CD14-positive monocyte (primary cell): ENCODE measurements at regions of chr1 and their contacts with region 1.

Region 1: GRCh38 chr1:32876341-32877210 is 5.9 kb upstream of the FNDC5 start:
- DNase-seq: peak; percentile 47 to 65 (median 53)
- H3K4me3 ChIP-seq: no peak overlapping the region
- H3K4me3 Mint-ChIP-seq: no peak overlapping the region
- H3K27ac ChIP-seq: no peak overlapping the region
- H3K27ac Mint-ChIP-seq: peak overlapping the region in 1 of 7 donors; percentile 62
- H3K4me1 ChIP-seq: no peaks in the 10 kb centered on the region
- H3K4me1 Mint-ChIP-seq: peaks cover 5% of the 10 kb centered on the region
- H3K27me3 ChIP-seq: peaks cover 6 to 35% of the 10 kb centered on the region in 2 donors
- H3K27me3 Mint-ChIP-seq: peaks cover 27 to 46% (median 44%) of the 10 kb centered on the region in 3 donors
- CTCF ChIP-seq: peak; percentile 96

Region 2: GRCh38 chr1:32521165-32521564 is 355.4 kb before region 1 on chr1:
- intact Hi-C with region 1: loop called in 1 of 2 experiments (anchors 10 kb)
- DNase-seq: no peak
- H3K4me3 ChIP-seq: no peak overlapping the region
- H3K4me3 Mint-ChIP-seq: peak overlapping the region; percentile 10 to 75
- H3K27ac ChIP-seq: no peak overlapping the region
- H3K27ac Mint-ChIP-seq: no peak overlapping the region
- H3K4me1 ChIP-seq: peaks cover 4 to 5% of the 10 kb centered on the region in 2 donors
- H3K4me1 Mint-ChIP-seq: peaks cover 3% of the 10 kb centered on the region
- H3K27me3 ChIP-seq: no peaks in the 10 kb centered on the region
- H3K27me3 Mint-ChIP-seq: peaks cover 4 to 10% (median 10%) of the 10 kb centered on the region in 3 donors
- CTCF ChIP-seq: no peak

Region 3: DNA sequence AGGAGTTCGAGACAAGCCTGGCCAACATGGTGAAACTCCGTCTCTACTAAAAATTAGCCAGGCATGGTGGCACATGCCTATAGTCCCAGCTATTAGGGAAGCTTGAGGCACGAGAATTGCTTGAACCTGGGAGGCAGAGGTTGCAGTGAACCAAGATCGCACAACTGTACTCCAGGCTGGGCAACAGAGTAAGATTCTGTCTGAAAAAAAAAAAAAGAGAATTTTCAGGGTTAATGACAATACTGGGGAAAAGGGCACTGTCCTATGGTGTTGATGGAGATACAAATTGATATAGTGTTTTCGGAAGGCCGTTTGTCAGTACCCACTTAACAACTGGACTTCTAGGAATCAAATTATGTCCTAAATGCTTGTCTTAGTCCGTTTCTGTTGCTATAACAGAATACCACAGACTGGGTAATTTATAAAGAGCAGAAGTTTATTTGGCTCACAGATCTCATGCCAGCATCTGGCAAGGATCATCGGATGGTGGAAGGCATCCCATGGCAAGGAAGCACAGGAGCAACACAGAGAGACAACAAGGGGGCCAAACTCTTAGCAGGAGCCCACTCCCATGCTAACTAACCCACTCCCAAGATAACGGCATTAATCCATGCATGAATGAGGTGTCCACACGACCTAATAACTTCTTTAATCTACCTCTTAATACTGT is 296.1 kb before region 1 on chr1:
- intact Hi-C with region 1: no loop called
- DNase-seq: no peak
- H3K4me3 ChIP-seq: no peak overlapping the region
- H3K4me3 Mint-ChIP-seq: no peak overlapping the region
- H3K27ac ChIP-seq: no peak overlapping the region
- H3K27ac Mint-ChIP-seq: no peak overlapping the region
- H3K4me1 ChIP-seq: no peaks in the 10 kb centered on the region
- H3K4me1 Mint-ChIP-seq: peaks cover 3% of the 10 kb centered on the region
- H3K27me3 ChIP-seq: no peaks in the 10 kb centered on the region
- H3K27me3 Mint-ChIP-seq: peaks cover 0 to 7% (median 0%) of the 10 kb centered on the region in 3 donors
- CTCF ChIP-seq: no peak